GM12878 (cell line): ENCODE measurements at regions of chr2 and their contacts with region 1.

Region 1: GRCh38 chr2:196337208-196337953 is 166.0 kb upstream of the STK17B start:
- DNase-seq: no peak
- ATAC-seq: peak; percentile 67
- H3K4me3 ChIP-seq: no peak overlapping the region
- H3K27ac ChIP-seq: peak overlapping the region; percentile 48
- H3K4me1 ChIP-seq: peaks cover 7% of the 10 kb centered on the region; the same call in 1 of the 2 replicates
- H3K27me3 ChIP-seq: no peaks in the 10 kb centered on the region
- CTCF ChIP-seq: peak in 2 of 3 experiments; percentile 28 to 40; a peak in 3 of 6 replicates
- EP300 ChIP-seq: no peak
- POLR2A ChIP-seq: no peak
- RAD21 ChIP-seq: peak; percentile 52

Region 2: GRCh38 chr2:196309691-196310090 is 27.7 kb before region 1 on chr2:
- CTCF ChIA-PET with region 1: interaction called, 14 read pairs
- POLR2A ChIA-PET with region 1: no interaction called
- RAD21 ChIA-PET with region 1: interaction called, 7 read pairs
- SMC1A ChIA-PET with region 1: interaction called, 6 read pairs
- in situ Hi-C with region 1: no loop called
- intact Hi-C with region 1: no loop called
- DNase-seq: no peak
- ATAC-seq: no peak
- H3K4me3 ChIP-seq: no peak overlapping the region
- H3K27ac ChIP-seq: no peak overlapping the region
- H3K4me1 ChIP-seq: no peaks in the 10 kb centered on the region
- H3K27me3 ChIP-seq: no peaks in the 10 kb centered on the region
- CTCF ChIP-seq: no peak
- EP300 ChIP-seq: no peak
- POLR2A ChIP-seq: no peak
- RAD21 ChIP-seq: no peak

Region 3: GRCh38 chr2:196356332-196356731 is 19.0 kb after region 1 on chr2:
- CTCF ChIA-PET with region 1: interaction called, 6 read pairs
- POLR2A ChIA-PET with region 1: no interaction called
- RAD21 ChIA-PET with region 1: interaction called, 3 read pairs
- SMC1A ChIA-PET with region 1: interaction called, 16 read pairs
- in situ Hi-C with region 1: no loop called
- intact Hi-C with region 1: no loop called
- DNase-seq: no peak
- ATAC-seq: no peak
- H3K4me3 ChIP-seq: no peak overlapping the region
- H3K27ac ChIP-seq: no peak overlapping the region
- H3K4me1 ChIP-seq: no peaks in the 10 kb centered on the region
- H3K27me3 ChIP-seq: no peaks in the 10 kb centered on the region
- CTCF ChIP-seq: no peak
- EP300 ChIP-seq: no peak
- POLR2A ChIP-seq: no peak
- RAD21 ChIP-seq: no peak

Region 4: DNA sequence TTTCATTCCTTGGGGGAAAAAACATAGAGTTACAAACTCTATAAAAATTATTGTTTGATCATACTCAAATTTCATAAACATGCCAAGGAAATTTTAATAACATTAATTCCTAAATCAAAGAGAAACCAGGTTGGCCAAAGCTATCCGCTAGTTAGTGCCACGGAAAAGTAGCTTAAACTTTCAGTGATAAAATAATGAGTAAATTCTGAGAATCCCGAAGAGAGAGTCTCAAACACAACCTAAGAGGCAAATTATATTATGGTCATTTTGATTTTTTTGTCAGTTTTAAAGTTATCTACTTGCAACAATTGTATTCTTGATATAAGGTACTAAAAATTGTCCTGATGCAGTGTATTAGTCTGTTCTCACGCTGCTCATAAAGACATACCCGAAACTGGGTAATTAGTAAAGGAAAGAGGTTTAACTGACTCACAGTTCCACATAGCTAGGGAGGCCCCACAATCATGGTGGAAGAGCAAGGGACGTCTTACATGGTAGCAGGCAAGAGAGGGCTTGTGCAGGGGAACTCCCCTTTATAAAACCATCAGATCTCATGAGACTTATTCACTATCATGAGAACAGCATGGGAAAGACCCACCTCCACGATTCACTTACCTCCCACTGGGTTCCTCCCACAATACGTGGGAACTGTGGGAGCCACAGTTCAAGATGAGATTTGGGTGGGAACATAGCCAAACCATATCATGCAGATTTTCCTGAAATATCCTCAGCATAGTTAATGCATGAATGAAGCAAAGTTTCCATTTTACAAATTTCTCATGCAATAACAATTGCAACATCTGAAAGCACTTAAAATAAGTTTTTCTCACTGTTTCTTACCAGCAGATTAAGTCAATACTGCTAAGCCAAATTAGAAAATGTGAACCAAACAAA is 39.9 kb after region 1 on chr2:
- CTCF ChIA-PET with region 1: interaction called, 3 read pairs
- POLR2A ChIA-PET with region 1: interaction called, 7 read pairs
- RAD21 ChIA-PET with region 1: interaction called, 6 read pairs
- SMC1A ChIA-PET with region 1: interaction called, 10 read pairs
- in situ Hi-C with region 1: no loop called
- intact Hi-C with region 1: loop called (anchors 2 kb)
- DNase-seq: peak; percentile 93
- ATAC-seq: peak; percentile 77
- H3K4me3 ChIP-seq: no peak overlapping the region
- H3K27ac ChIP-seq: peak overlapping the region; percentile 99
- H3K4me1 ChIP-seq: peaks cover 29% of the 10 kb centered on the region
- H3K27me3 ChIP-seq: no peaks in the 10 kb centered on the region
- CTCF ChIP-seq: no peak
- EP300 ChIP-seq: 0 out of 4 replicates have a peak, but pooled peaks of 1 of the 2 experiments have one; percentile 4
- POLR2A ChIP-seq: no peak
- RAD21 ChIP-seq: peak; percentile 34; the same call in 1 of the 2 replicates